ENCODE measurements at regions of chr6 and their contacts with region 1.

Region 1: GRCh38 chr6:70310063-70310694 is 7.3 kb upstream of the COL9A1 start:
- DNase-seq: peak; percentile 48
- H3K4me3 Mint-ChIP-seq: no peak overlapping the region
- H3K27ac Mint-ChIP-seq: no peak overlapping the region
- H3K4me1 Mint-ChIP-seq: peaks cover 33% of the 10 kb centered on the region
- H3K27me3 Mint-ChIP-seq: peaks cover 73% of the 10 kb centered on the region
- CTCF ChIP-seq: peak; percentile 52

Region 2: GRCh38 chr6:70353343-70353913 is 43.2 kb after region 1 on chr6:
- CTCF ChIA-PET with region 1: interaction called, 7 read pairs
- intact Hi-C with region 1: loop called (anchors 5 kb)
- DNase-seq: peak; percentile 22
- H3K4me3 Mint-ChIP-seq: no peak overlapping the region
- H3K27ac Mint-ChIP-seq: no peak overlapping the region
- H3K4me1 Mint-ChIP-seq: peaks cover 10% of the 10 kb centered on the region
- H3K27me3 Mint-ChIP-seq: no peaks in the 10 kb centered on the region
- CTCF ChIP-seq: no peak

Region 3: DNA sequence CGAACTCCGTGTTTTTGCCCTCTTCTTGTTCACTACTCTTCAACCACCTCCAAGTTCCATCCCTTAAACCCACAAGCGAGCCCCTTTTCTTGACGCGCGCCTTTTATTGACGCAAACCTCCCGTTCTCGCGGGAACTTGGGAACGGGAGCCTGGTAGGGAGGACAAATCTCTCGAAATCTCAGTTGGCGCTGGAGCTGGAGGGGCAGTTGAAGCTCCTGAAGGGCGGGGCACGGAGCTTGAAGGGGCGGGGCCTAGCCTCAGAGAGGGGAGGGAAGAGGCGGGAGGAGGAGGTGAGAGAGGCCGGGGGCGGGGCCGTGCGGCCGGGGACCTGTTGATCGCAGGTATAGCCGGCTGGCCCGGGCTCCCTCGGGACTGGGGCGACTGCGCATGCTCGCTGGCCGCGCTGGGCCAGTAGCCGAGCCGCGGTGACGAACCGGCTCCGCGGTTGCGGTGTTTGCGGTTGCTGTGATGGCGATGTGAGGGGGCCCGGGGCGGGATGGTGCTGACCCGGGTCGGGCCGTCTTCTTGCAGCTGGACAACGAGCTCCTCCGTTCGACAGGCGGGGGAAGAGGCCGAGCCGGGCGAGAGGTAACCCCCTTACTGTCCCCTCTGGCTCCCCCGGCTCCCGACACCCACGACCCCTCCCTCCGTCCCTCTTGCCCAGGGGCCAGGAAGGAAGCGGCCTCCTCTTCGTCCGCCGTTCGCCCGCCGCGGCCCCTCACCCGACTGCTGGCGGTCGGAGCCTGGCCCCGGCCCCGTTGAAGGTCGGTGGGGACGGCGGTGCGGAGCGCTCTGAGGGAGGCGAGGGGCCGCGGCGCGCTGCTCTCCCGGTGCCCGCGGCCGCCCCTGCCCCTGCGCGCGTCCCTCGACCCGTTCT is 103.2 kb after region 1 on chr6 and contains the start of gene FAM135A:
- CTCF ChIA-PET with region 1: interaction called, 20 read pairs
- intact Hi-C with region 1: loop called (anchors 5 kb)
- DNase-seq: peak; percentile 100
- H3K4me3 Mint-ChIP-seq: peak within 1 kb of the TSS; percentile 90
- H3K27ac Mint-ChIP-seq: peak within 1 kb of the TSS; percentile 91
- H3K4me1 Mint-ChIP-seq: peaks cover 22% of the 10 kb centered on the region
- H3K27me3 Mint-ChIP-seq: no peaks in the 10 kb centered on the region
- CTCF ChIP-seq: no peak
- total RNA-seq, gene FAM135A: 83.2 and 89.2 TPM in 2 replicates

Region 4: DNA sequence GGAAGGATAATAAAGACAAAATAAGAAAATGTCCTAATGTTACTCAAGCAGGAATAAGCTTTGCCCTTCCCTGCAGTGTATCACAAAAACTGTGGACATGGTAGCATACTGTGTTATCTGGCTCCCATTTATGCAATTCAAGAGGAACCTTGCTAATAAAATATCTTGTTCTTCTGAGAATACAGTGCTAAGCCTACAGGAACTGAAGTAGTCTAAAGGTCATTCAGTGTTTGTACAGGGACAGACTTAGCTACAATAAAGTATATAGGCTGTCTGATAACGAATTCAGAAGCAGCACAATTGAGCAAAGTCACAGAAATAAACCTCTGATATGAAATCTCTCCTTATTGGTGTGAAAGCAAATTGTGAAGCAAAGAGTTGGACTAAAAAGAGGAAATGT is 197.0 kb after region 1 on chr6:
- CTCF ChIA-PET with region 1: no interaction called
- intact Hi-C with region 1: loop called (anchors 10 kb)
- DNase-seq: no peak
- H3K4me3 Mint-ChIP-seq: no peak overlapping the region
- H3K27ac Mint-ChIP-seq: peak overlapping the region; percentile 12
- H3K4me1 Mint-ChIP-seq: peaks cover 9% of the 10 kb centered on the region
- H3K27me3 Mint-ChIP-seq: no peaks in the 10 kb centered on the region
- CTCF ChIP-seq: no peak

Region 5: DNA sequence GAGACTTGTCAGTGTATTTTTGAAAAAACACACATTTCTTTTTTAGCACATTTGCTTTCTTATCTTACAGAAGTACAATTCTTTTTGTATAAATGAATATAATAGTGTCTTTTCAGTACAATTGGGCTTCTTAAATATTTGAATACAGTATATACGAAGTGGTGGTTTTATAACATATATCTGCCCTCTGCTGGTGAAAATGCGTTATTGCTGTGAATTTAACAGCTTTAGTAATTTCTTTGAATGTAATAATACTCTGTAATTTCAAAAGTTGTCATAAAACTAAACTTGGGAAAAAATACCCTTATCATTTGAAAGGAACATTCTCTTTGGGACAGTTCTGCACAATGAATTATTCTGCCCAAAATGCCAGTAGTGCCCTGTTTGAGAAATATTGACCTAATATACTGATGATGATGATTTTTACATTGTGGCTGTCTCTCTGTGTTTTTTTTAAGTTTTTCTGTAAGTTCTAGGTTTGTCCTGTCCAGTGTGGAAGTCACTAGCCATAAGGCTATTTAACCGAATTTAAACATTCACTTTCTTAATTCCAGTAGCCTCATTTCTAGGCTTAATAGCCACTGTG is 376.5 kb after region 1 on chr6:
- CTCF ChIA-PET with region 1: interaction called, 8 read pairs
- intact Hi-C with region 1: loop called (anchors 1 kb)
- DNase-seq: no peak
- H3K4me3 Mint-ChIP-seq: no peak overlapping the region
- H3K27ac Mint-ChIP-seq: no peak overlapping the region
- H3K4me1 Mint-ChIP-seq: peaks cover 23% of the 10 kb centered on the region
- H3K27me3 Mint-ChIP-seq: no peaks in the 10 kb centered on the region
- CTCF ChIP-seq: peak; percentile 65

Region 6: GRCh38 chr6:70955441-70956190 is 645.4 kb after region 1 on chr6:
- CTCF ChIA-PET with region 1: interaction called, 10 read pairs
- intact Hi-C with region 1: loop called (anchors 2 kb)
- DNase-seq: peak; percentile 96
- H3K4me3 Mint-ChIP-seq: peak overlapping the region; percentile 99
- H3K27ac Mint-ChIP-seq: no peak overlapping the region
- H3K4me1 Mint-ChIP-seq: peaks cover 8% of the 10 kb centered on the region
- H3K27me3 Mint-ChIP-seq: peaks cover 97% of the 10 kb centered on the region
- CTCF ChIP-seq: peak; percentile 95

Measured in Calu3 (cell line).